ENCODE measurements at regions of chr2 and their contacts with region 1.

Region 1: GRCh38 chr2:228039752-228040534 is 141.5 kb downstream of the SPHKAP start:
- DNase-seq: no peak
- ATAC-seq: no peak
- H3K4me3 ChIP-seq: no peak overlapping the region
- H3K27ac ChIP-seq: no peak overlapping the region
- H3K4me1 ChIP-seq: no peaks in the 10 kb centered on the region
- H3K27me3 ChIP-seq: no peaks in the 10 kb centered on the region
- CTCF ChIP-seq: peak; percentile 74; the same call in 1 of the 2 replicates

Region 2: DNA sequence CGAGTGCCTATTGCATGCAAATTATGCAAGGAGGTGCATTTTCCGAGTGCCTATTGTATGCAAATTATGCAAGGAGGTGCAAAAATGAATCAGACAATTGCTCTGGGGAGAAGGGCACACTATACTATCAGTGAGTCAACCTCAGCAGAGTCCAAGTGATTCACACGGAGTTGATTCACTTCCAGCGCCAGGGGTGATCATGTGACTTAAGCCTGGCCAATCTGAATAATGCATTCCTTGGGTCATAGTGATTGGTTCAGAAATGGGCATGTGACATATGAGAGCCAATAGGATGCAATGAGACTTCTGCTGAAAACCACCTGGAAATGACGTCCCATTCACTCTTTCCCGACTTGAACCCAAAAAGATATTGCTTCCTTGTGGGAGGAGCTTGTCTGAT is 16.3 kb before region 1 on chr2:
- CTCF ChIA-PET with region 1: no interaction called
- POLR2A ChIA-PET with region 1: no interaction called
- in situ Hi-C with region 1: no loop called
- intact Hi-C with region 1: no loop called
- DNase-seq: no peak
- ATAC-seq: no peak
- H3K4me3 ChIP-seq: no peak overlapping the region
- H3K27ac ChIP-seq: no peak overlapping the region
- H3K4me1 ChIP-seq: no peaks in the 10 kb centered on the region
- H3K27me3 ChIP-seq: no peaks in the 10 kb centered on the region
- CTCF ChIP-seq: no peak

Region 3: DNA sequence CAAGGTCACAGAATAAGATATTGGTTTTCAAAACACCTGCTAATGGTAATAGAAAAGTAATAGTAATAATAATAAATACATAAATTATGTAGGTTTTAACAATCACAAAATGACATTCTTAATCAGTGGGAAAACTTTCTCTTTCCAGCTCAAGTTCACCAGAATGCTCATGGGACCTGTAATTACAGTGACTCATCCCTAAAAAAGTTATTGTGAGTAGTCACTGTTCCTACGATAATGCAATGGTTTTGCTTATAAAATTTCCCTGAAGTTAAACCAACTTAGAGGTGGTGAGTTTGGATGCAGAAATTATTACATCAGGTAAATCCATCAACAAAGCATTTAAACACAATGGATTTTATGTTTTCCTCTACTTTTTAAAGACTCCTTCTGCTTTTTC is 728.9 kb after region 1 on chr2:
- CTCF ChIA-PET with region 1: interaction called, 10 read pairs
- POLR2A ChIA-PET with region 1: no interaction called
- in situ Hi-C with region 1: no loop called
- intact Hi-C with region 1: no loop called
- DNase-seq: no peak
- ATAC-seq: no peak
- H3K4me3 ChIP-seq: no peak overlapping the region
- H3K27ac ChIP-seq: no peak overlapping the region
- H3K4me1 ChIP-seq: no peaks in the 10 kb centered on the region
- H3K27me3 ChIP-seq: no peaks in the 10 kb centered on the region
- CTCF ChIP-seq: no peak